ENCODE measurements at regions of chr19 and their contacts with region 1.

Region 1: GRCh38 chr19:13588957-13589833 is 82.9 kb upstream of the CACNA1A start:
- DNase-seq: no peak
- H3K4me3 ChIP-seq: no peak overlapping the region; the same call in 1 of the 2 replicates
- CTCF ChIP-seq: peak; percentile 99

Region 2: GRCh38 chr19:12974301-12975220 is 614.6 kb before region 1 on chr19:
- CTCF ChIA-PET with region 1: interaction called, 27 read pairs
- POLR2A ChIA-PET with region 1: no interaction called
- DNase-seq: no peak
- H3K4me3 ChIP-seq: no peak overlapping the region
- CTCF ChIP-seq: no peak

Region 3: GRCh38 chr19:13363245-13363644 is 225.9 kb before region 1 on chr19:
- CTCF ChIA-PET with region 1: interaction called, 14 read pairs
- POLR2A ChIA-PET with region 1: no interaction called
- DNase-seq: no peak
- H3K4me3 ChIP-seq: no peak overlapping the region
- CTCF ChIP-seq: no peak

Region 4: DNA sequence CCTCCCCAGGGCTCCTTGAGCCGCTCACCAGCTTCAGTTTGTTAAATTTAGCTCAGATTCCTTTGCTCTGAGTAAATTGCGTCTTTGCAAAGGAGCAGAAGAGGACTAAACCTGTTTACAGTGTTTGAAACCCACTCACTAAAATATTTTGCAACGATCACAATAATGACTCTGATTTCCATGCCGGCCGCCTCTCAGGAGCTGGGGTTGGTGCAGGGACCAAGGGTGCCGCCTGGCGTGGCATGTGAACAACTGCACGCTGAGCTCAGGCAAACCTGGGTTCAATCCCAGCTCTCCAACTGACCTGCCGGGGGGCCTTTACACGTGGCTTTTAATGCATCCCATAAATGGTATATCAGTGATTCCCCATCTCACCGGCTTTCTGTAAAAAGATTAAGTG is 14.3 kb before region 1 on chr19:
- CTCF ChIA-PET with region 1: interaction called, 74 read pairs
- POLR2A ChIA-PET with region 1: no interaction called
- DNase-seq: no peak
- H3K4me3 ChIP-seq: no peak overlapping the region
- CTCF ChIP-seq: peak; percentile 54

Region 5: DNA sequence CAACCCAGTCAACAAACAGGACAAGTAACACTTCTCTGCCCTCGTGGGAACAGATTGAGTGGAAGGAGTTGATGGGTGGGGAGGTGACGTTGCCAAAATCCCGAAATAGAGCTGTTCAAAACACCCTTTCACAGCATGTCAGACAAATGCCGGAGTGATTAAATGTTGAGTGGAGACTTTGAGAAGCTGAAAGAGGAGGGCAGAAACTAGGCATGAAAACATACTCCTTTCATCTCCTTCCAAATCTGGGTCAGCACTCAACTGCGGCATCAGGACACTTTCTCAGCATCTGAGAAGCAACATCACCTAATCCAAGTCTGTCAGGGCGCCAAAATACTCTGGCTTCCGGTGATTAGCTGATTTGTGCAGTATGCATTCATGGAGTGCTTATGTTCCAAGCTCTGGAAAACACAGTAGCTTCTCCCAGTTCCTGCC is 123.6 kb after region 1 on chr19:
- CTCF ChIA-PET with region 1: interaction called, 278 read pairs
- POLR2A ChIA-PET with region 1: no interaction called
- DNase-seq: no peak
- H3K4me3 ChIP-seq: no peak overlapping the region
- CTCF ChIP-seq: no peak

Measured in AG04449 (cell line).